Breast epithelium (tissue), 4 donors: ENCODE measurements at regions of chr7 and their contacts with region 1.

Region 1: DNA sequence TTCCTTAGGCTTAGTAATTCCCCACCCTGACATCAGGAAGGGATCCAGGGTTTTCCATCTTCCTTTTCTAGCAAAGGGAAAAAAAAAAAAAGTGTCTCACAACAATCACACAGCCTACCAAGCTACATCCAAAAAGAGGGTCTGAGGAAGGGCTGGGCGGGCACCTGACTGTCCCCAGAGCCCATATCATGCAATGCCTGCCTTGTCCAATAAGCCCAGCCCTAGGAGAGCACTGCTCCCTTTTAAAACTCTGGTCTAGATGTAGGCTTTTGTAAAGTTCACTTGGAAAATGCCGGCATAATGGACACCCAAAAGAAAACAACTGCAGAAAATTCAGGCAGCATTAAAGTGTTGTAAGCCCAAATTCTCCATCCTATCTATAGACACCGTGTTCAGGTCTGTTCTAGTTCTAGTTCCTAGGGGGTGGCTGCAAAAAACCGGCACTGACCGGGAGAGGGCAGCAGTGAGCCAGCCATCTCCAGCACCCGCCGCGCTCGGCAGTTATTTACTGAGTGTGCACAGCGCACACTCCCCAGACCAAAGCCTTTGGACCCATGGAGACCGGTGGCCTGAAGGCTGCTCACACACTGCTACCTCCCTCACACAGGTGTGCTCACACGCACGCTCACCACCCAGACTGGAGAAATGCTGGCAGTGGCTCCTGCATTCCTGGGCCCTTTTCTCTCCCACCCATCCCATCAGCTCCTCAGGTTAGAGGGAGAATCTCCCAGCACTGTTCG is 48.7 kb downstream of the PODXL start:
- DNase-seq: peak; percentile 74 to 89
- H3K4me3 ChIP-seq: peak overlapping the region in 1 of 3 donors; percentile 48
- H3K27ac ChIP-seq: peak overlapping the region in 1 of 2 donors; percentile 3
- H3K4me1 ChIP-seq: peaks cover 6 to 7% of the 10 kb centered on the region in 2 donors
- H3K27me3 ChIP-seq: peaks cover 0 to 5% of the 10 kb centered on the region in 2 donors
- CTCF ChIP-seq: peak; percentile 87 to 93 (median 92)
- POLR2A ChIP-seq: no peak

Region 2: DNA sequence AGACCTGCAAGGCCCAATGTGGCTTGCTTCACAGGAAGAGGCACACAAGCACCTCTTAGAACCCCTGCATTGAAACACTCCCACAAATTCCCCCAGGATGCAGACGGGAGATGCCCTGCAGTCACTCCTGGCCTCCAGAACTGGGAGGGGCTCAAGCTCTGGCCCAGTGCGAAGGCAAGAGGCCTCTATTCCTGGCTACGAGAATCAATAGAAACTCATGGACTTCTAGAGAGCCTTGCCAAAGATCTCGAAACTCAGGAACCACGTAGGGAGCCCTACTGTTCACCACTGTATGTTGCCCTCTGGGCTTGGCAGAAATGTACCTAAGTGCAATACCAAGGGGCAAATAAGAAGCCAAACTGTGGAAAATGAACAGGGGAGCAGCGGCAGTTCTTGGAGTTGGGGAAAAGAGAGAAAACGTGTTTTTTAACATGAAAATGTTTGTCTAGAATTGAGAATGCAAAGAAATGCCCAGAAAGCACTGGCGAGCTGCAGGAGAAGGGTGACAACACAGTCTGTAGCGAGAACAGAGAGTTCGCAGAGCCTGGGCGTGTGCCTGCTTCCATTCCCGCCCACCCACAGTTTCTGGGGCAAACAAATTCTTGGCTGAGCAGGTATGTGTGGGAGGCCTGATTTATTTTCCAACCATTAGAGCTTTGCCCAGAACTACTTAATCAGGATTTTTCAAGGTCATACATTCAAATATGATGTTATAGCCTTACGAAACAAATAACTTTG is 513.2 kb before region 1 on chr7:
- intact Hi-C with region 1: no loop called
- DNase-seq: peak in 1 of 2 donors; percentile 75
- H3K4me3 ChIP-seq: peak overlapping the region in 2 of 3 donors; percentile 1 to 4
- H3K27ac ChIP-seq: peak overlapping the region; percentile 82 to 86
- H3K4me1 ChIP-seq: peaks cover 7 to 60% of the 10 kb centered on the region in 2 donors
- H3K27me3 ChIP-seq: no peaks in the 10 kb centered on the region
- CTCF ChIP-seq: no peak
- POLR2A ChIP-seq: no peak

Region 3: DNA sequence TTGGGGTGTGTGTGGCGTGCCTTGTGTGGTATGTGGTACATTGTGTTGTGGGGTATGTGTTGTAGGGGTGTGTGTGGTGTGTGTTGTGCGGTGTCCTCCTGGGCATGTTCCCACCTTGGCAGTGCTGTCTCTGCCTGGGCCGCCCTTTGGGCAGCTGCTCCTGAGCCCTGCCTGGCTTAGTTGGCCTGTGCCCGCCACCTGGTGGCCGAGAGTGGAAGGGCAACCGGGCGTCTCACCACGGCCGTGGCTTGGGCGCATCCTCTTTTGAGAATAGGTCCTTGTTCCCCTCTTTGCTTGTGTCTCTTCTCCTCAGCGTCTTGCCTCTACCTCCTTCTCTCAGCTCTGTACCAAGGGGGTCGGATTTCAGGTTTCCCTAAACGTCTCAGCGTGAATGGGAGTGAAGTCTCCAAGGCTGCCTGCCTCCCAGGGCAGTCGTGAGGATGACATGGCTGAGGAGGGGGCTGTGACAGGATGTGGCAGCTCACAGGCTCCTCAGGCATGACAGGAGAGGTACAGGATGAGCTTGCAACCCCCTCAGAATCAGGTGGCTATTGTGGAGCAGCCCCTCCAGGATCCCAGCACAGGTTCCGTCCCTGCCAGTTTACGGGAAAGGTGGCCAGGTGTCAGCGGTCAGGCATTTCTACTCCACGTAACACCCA is 147.0 kb after region 1 on chr7:
- intact Hi-C with region 1: loop called (anchors 10 kb)
- DNase-seq: peak; percentile 62 to 90
- H3K4me3 ChIP-seq: no peak overlapping the region
- H3K27ac ChIP-seq: no peak overlapping the region
- H3K4me1 ChIP-seq: no peaks in the 10 kb centered on the region
- H3K27me3 ChIP-seq: no peaks in the 10 kb centered on the region
- CTCF ChIP-seq: peak; percentile 91 to 98 (median 96)
- POLR2A ChIP-seq: no peak

Region 4: DNA sequence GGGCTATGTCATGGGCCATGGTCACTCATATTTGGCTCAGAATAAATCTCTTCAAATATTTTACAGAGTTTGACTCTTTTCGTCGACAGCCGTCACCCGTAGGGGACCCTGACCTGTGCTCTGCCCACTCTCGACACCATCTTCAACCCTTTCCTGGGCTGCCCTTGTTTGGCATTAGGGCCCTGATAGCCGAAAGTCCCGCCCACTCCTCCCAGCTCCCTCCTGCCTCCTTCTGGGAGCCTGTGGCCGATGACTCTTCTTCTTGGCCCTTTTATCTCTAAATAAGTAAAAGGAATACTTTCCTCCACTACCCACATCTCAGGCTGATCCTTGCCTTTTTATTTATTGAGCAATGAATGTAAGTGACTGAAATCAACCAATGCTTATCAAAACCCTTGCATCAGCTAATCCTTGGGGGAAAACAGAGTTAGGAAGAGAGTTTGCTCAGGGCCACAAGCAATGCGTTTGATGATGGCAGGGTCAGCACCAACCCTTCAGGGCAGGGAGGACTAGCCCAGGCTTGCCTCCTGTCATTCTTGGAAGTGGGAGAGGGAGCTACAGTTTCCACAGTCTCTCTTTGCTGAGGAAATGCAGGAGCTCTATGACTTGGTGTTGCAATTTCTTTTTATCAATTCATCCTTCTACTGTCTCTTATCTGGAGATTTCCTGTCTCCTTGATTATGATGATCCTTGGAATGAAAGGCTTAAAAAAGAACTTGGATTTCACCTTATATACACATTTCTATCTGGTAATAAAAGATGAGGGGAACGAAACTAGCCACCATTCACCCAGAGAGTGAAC is 266.9 kb after region 1 on chr7:
- intact Hi-C with region 1: no loop called
- DNase-seq: no peak
- H3K4me3 ChIP-seq: no peak overlapping the region
- H3K27ac ChIP-seq: no peak overlapping the region
- H3K4me1 ChIP-seq: no peaks in the 10 kb centered on the region
- H3K27me3 ChIP-seq: no peaks in the 10 kb centered on the region
- CTCF ChIP-seq: no peak
- POLR2A ChIP-seq: no peak